ENCODE measurements at regions of chr20 and their contacts with region 1.

Region 1: DNA sequence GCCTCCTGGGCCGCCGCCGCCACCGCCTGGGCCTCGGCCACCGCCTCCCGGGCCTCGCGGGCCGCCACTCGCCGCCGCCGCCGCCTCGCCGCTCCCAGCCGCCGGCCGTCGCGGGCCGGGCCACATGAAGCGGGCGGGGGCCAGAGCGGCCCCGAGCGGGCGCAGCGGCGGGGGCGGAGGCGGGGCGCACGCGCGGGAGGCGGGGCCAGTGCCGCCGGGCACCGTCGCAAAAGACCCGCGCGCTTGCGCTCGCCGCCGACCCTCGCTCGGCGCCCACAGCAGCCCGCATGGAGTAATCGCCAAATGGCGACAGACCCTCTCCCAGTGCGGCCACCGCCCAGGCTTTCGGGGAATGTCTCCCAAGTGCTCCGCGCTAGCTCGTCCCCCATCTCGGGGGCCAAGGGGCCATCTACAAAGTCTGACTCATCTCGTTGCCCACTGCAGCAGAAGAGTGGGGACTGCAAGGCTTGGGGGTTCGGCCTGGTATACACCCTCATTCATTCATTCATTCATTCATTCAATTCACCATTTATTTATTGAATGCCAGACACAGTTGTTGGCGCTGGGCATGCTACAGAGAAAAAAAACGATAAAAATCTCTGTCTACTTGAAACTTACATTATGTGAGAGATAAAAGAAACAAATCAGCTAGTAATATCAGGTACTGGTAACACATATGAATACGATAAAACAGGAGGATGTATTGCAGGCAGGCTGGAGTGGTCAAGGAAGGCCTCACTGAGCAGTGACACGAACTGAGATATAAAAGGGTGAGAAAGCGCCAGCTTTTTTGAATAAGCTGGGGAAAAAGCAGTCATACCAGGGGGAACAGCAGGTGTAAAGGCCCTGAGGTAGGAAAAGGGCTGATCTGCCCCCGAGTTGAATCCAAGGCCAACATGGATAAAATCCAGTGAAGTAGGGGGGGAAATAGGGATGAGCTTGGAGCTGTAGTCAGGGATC is at the start of gene B4GALT5:
- DNase-seq: peak; percentile 76 to 81 (median 78)
- ATAC-seq: peak; percentile 65 to 87 (median 84)
- H3K4me3 ChIP-seq: peak within 1 kb of the TSS; percentile 77 to 97 (median 92)
- H3K27ac ChIP-seq: peak within 1 kb of the TSS; percentile 83 to 95 (median 94)
- H3K4me1 ChIP-seq: peaks cover 0 to 34% (median 7%) of the 10 kb centered on the region in 4 donors
- H3K27me3 ChIP-seq: no peaks in the 10 kb centered on the region
- CTCF ChIP-seq: no peak
- POLR2A ChIP-seq: peak; percentile 58
- total RNA-seq, gene B4GALT5: 9.5 to 32.6 (median 15.5) TPM

Region 2: GRCh38 chr20:49323622-49324238 is 390.3 kb before region 1 on chr20:
- intact Hi-C with region 1: no loop called
- DNase-seq: no peak
- ATAC-seq: peak; percentile 62 to 83 (median 74)
- H3K4me3 ChIP-seq: no peak overlapping the region
- H3K27ac ChIP-seq: no peak overlapping the region
- H3K4me1 ChIP-seq: peaks cover 0 to 3% (median 0%) of the 10 kb centered on the region in 4 donors
- H3K27me3 ChIP-seq: peaks cover 0 to 17% of the 10 kb centered on the region in 2 donors
- CTCF ChIP-seq: peak in 3 of 4 donors; percentile 18 to 32 (median 27)
- POLR2A ChIP-seq: no peak

Region 3: GRCh38 chr20:49768204-49769047 is 54.4 kb after region 1 on chr20:
- intact Hi-C with region 1: loop called in 1 of 2 experiments (anchors 10 kb)
- DNase-seq: peak; percentile 69 to 91 (median 77)
- ATAC-seq: peak; percentile 68 to 85 (median 78)
- H3K4me3 ChIP-seq: peak overlapping the region in 1 of 3 donors; percentile 10
- H3K27ac ChIP-seq: peak overlapping the region; percentile 63 to 80 (median 71)
- H3K4me1 ChIP-seq: peaks cover 0 to 89% (median 47%) of the 10 kb centered on the region in 4 donors
- H3K27me3 ChIP-seq: no peaks in the 10 kb centered on the region
- CTCF ChIP-seq: no peak
- POLR2A ChIP-seq: peak; percentile 25